Activated naive CD8-positive, alpha-beta T cell treated with anti-CD3 and anti-CD28 coated beads, Interleukin-2, amount 10 ng/mL, durations not matched to agents 7 days and 5 days (primary cell): ENCODE measurements at regions of chr17 and their contacts with region 1.

Region 1: GRCh38 chr17:48584223-48584741 is 5.8 kb downstream of the HOXB3 start:
- DNase-seq: no peak
- ATAC-seq: no peak
- H3K4me3 Mint-ChIP-seq: peak overlapping the region; percentile 89
- H3K27ac Mint-ChIP-seq: no peak overlapping the region
- H3K4me1 Mint-ChIP-seq: peaks cover 51% of the 10 kb centered on the region
- H3K27me3 Mint-ChIP-seq: peaks cover 88% of the 10 kb centered on the region

Region 2: DNA sequence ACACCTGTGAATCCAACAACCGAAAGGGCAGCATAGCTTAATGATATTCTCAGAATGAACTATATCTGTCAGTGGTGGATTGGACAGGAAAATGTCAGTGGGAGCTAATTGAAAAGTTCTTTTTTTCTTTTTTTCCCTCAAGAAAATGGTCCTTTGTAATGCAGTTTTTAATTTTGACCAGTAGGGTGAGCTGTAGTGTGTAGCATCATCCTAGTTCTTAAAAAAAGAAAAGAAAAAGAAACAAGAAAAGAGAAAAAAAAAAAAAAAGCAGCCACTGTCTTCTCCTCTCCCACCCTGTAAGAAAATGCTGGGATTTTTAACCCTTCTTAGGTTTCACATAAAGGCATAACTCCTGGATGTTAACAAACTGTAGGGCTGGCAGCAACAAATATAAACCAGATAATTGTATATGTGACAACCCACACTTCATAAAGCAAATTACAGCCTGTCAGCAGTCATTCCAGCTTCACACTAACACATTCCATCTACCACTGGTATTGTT is 232.4 kb before region 1 on chr17:
- POLR2A ChIA-PET with region 1: interaction called, 10 read pairs
- DNase-seq: no peak
- ATAC-seq: no peak
- H3K4me3 Mint-ChIP-seq: no peak overlapping the region
- H3K27ac Mint-ChIP-seq: no peak overlapping the region
- H3K4me1 Mint-ChIP-seq: peaks cover 9% of the 10 kb centered on the region
- H3K27me3 Mint-ChIP-seq: no peaks in the 10 kb centered on the region